ENCODE measurements at regions of chr20 and their contacts with region 1.

Region 1: GRCh38 chr20:44609511-44610312 is 27.3 kb downstream of the PKIG start:
- DNase-seq: peak; percentile 84
- H3K4me3 Mint-ChIP-seq: peak overlapping the region; percentile 22
- H3K27ac Mint-ChIP-seq: peak overlapping the region; percentile 95
- H3K4me1 Mint-ChIP-seq: peaks cover 25% of the 10 kb centered on the region
- H3K27me3 Mint-ChIP-seq: no peaks in the 10 kb centered on the region

Region 2: GRCh38 chr20:44598423-44599305 is 11.0 kb before region 1 on chr20:
- CTCF ChIA-PET with region 1: interaction called, 19 read pairs
- POLR2A ChIA-PET with region 1: interaction called, 5 read pairs
- DNase-seq: no peak
- H3K4me3 Mint-ChIP-seq: peak overlapping the region; percentile 44
- H3K27ac Mint-ChIP-seq: peak overlapping the region; percentile 79
- H3K4me1 Mint-ChIP-seq: peaks cover 28% of the 10 kb centered on the region
- H3K27me3 Mint-ChIP-seq: no peaks in the 10 kb centered on the region

Region 3: DNA sequence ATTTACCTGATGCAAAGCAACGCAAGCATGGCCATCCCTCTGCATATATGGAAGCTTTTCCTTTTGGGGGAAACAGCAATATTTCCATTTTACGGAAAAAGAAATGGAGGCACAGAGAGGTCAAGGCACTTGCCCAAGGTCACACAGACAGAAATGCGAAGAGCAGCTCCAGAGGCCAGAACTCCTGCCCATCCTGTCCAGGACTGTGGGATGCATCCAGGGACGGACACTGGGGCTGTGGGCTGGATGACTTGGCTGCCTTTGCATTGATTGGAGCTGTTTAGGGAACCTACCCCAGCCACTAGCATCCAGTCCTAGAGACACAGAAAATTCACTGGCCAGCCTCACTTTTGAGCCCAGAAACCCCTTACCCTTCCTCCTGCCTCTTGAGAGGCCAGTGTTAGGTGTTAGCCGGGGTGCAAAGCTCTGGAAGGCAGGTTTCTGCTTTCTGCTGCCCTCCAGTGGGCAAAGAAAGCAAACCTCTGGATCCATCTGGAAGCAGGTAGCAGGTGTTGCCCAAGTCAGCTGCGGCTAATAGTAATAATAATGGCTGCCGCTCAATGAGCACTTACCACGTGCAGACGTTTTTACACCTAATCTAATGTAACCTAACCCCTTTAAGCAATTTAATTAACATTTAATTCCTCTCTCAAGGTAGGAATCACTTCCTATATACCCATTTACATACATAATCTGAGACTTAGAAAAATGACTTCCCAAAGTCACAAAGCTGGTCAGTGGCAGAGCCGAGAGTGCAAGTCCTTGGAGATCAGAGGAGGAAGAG is 73.7 kb after region 1 on chr20:
- CTCF ChIA-PET with region 1: interaction called, 10 read pairs
- POLR2A ChIA-PET with region 1: no interaction called
- DNase-seq: peak; percentile 61
- H3K4me3 Mint-ChIP-seq: no peak overlapping the region
- H3K27ac Mint-ChIP-seq: no peak overlapping the region
- H3K4me1 Mint-ChIP-seq: peaks cover 14% of the 10 kb centered on the region
- H3K27me3 Mint-ChIP-seq: no peaks in the 10 kb centered on the region

Measured in activated CD4-positive, alpha-beta T cell treated with anti-CD3 and anti-CD28 coated beads, Interleukin-2, amount 10 ng/mL, durations not matched to agents 7 days and 5 days (primary cell).